ENCODE measurements at regions of chr1 and their contacts with region 1.

Region 1: GRCh38 chr1:172532700-172533509 is at the start of gene SUCO:
- DNase-seq: peak; percentile 100
- H3K4me3 Mint-ChIP-seq: peak within 1 kb of the TSS; percentile 89
- H3K27ac Mint-ChIP-seq: peak within 1 kb of the TSS; percentile 97
- H3K4me1 Mint-ChIP-seq: peaks cover 38% of the 10 kb centered on the region
- H3K27me3 Mint-ChIP-seq: peaks cover 17% of the 10 kb centered on the region
- total RNA-seq, gene SUCO: 37.2 and 38.0 TPM in 2 replicates

Region 2: DNA sequence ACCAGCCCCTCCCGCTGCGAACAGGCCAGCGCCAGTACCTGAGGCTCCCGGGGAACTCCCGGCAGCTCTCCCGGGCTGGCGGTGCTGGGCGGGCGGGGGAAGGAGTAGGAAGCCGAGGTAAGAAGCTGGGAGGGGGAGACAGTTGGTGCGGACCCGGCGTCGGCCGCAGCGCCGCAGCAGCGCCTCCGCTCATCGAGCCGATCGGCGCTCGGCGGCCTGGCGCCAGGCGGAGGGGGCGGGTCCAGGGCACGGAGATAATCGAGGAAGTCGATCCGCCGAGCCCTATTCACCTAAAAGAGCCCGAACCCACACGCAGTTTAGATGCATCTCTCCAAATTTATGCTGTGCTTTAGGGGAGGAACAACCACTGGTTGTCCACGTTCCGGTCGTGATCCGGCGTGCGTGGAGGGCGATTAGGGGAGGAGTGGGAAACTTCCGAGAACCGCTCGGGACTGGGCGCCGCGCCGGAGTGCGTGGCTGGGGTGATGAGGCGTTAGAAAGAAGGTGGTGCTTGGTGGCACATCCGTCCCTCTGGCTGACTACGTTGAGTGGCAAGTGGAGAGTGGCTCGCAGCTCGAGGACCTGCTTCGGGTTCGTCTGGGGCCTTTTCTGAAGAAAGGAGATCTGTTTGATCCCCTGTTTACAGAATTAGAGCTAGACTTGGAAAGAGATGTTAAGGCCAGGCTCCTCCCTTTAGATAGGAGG is 790.9 kb before region 1 on chr1 and contains the start of gene VAMP4:
- intact Hi-C with region 1: loop called (anchors 1 kb)
- DNase-seq: peak; percentile 95
- H3K4me3 Mint-ChIP-seq: peak within 1 kb of the TSS; percentile 100
- H3K27ac Mint-ChIP-seq: peak within 1 kb of the TSS; percentile 100
- H3K4me1 Mint-ChIP-seq: peaks cover 51% of the 10 kb centered on the region
- H3K27me3 Mint-ChIP-seq: no peaks in the 10 kb centered on the region
- total RNA-seq, gene VAMP4: 7.7 TPM in 2 replicates

Region 3: GRCh38 chr1:172338295-172338735 is 194.6 kb before region 1 on chr1:
- intact Hi-C with region 1: loop called (anchors 5 kb)
- DNase-seq: peak; percentile 72
- H3K4me3 Mint-ChIP-seq: peak overlapping the region; percentile 16
- H3K27ac Mint-ChIP-seq: peak overlapping the region; percentile 51
- H3K4me1 Mint-ChIP-seq: peaks cover 36% of the 10 kb centered on the region
- H3K27me3 Mint-ChIP-seq: no peaks in the 10 kb centered on the region

Region 4: GRCh38 chr1:172449585-172450534 is 83.0 kb before region 1 on chr1:
- intact Hi-C with region 1: loop called (anchors 1 kb)
- DNase-seq: peak; percentile 83
- H3K4me3 Mint-ChIP-seq: peak overlapping the region; percentile 39
- H3K27ac Mint-ChIP-seq: peak overlapping the region; percentile 65
- H3K4me1 Mint-ChIP-seq: peaks cover 27% of the 10 kb centered on the region
- H3K27me3 Mint-ChIP-seq: peaks cover 1% of the 10 kb centered on the region

Region 5: DNA sequence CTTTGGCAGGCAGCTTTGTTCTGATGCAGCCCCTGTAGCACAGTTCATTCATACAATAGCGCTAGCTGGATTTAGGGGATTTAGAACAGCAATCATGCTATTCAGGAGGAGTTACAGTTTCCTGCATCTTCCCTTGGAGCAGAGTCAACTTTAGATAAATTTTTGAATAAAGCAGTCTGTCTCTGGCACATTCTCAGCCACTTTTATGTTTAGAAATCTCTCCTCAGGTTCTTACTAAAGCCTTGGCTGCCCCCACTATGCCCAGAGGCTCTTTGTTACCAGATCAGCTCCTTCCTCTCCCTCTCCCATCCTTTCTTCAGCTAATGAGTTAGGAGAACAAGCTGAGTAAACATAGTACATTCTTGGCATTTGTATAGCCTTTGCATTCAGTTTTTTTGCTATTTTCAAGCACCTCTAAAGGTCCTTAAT is 72.0 kb before region 1 on chr1:
- intact Hi-C with region 1: no loop called
- DNase-seq: no peak
- H3K4me3 Mint-ChIP-seq: no peak overlapping the region
- H3K27ac Mint-ChIP-seq: no peak overlapping the region
- H3K4me1 Mint-ChIP-seq: no peaks in the 10 kb centered on the region
- H3K27me3 Mint-ChIP-seq: peaks cover 25% of the 10 kb centered on the region

Region 6: DNA sequence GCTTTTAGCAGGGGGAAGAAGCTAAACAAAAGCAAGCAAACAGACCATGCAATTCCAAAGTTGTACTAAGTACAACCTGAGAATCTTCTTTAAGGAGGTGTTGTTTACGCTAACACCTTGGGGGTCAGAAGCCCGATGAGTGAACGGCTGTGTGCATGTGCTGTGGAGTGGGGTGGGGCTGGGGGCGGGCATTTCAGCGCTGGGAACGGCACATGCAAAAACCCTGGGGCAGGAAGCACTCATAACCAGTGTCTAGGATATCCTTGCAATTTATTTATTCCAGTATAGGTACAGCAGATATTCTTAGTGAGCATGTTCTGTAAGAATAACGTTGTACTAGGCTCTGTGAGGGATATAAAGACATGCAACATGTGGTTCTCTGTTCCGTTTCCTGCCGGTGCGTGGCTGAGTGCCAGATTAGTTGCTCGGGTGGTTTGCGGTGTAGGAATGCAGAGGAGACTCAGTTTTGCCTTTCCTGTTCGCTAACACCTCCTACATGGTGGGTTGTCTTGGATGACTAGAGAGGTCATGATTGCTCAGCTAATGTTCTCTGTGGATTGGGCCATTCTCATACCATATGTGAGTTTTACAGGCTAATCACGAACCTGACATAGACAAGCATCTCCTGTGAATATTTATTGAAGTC is 129.7 kb after region 1 on chr1:
- intact Hi-C with region 1: loop called (anchors 2 kb)
- DNase-seq: peak; percentile 94
- H3K4me3 Mint-ChIP-seq: peak overlapping the region; percentile 79
- H3K27ac Mint-ChIP-seq: peak overlapping the region; percentile 83
- H3K4me1 Mint-ChIP-seq: peaks cover 64% of the 10 kb centered on the region
- H3K27me3 Mint-ChIP-seq: peaks cover 2% of the 10 kb centered on the region

Region 7: GRCh38 chr1:173476664-173477285 is 943.9 kb after region 1 on chr1:
- intact Hi-C with region 1: loop called (anchors 10 kb)
- DNase-seq: peak; percentile 92
- H3K4me3 Mint-ChIP-seq: peak overlapping the region; percentile 92
- H3K27ac Mint-ChIP-seq: peak overlapping the region; percentile 96
- H3K4me1 Mint-ChIP-seq: peaks cover 48% of the 10 kb centered on the region
- H3K27me3 Mint-ChIP-seq: no peaks in the 10 kb centered on the region

Region 8: GRCh38 chr1:174159252-174160108 is 1626.6 kb after region 1 on chr1 and contains the start of gene RABGAP1L:
- intact Hi-C with region 1: loop called (anchors 10 kb)
- DNase-seq: peak; percentile 98
- H3K4me3 Mint-ChIP-seq: peak within 1 kb of the TSS; percentile 93
- H3K27ac Mint-ChIP-seq: peak within 1 kb of the TSS; percentile 98
- H3K4me1 Mint-ChIP-seq: peaks cover 52% of the 10 kb centered on the region
- H3K27me3 Mint-ChIP-seq: no peaks in the 10 kb centered on the region
- total RNA-seq, gene RABGAP1L: 36.9 and 37.2 TPM in 2 replicates

Measured in activated CD4-positive, alpha-beta T cell treated with anti-CD3 and anti-CD28 coated beads, Interleukin-2, amount 10 ng/mL, durations not matched to agents 24 days and 14 days (primary cell).